GM12878 (cell line): ENCODE measurements at regions of chr2 and their contacts with region 1.

Region 1: DNA sequence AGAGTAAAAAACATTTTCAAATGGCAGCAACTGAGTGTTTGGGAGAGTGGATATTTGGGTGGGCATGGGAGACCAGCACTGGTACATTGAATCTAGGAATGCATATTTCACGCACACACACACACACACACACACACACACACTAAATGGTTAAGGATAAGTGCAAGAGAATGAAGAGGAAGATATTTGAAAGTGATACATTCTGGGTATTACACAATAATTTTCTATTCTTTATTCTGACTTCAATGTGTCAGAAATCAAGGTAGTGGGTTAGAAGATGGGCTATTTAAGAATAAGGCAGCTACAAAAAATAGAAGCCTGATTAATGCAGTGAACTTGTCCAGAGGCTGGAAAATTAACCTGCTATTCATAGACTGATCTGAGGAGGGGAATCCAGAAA is 577.0 kb downstream of the TMEM182 start:
- DNase-seq: no peak
- ATAC-seq: no peak
- H3K4me3 ChIP-seq: no peak overlapping the region
- H3K27ac ChIP-seq: no peak overlapping the region
- H3K4me1 ChIP-seq: no peaks in the 10 kb centered on the region
- H3K27me3 ChIP-seq: no peaks in the 10 kb centered on the region
- CTCF ChIP-seq: no peak
- EP300 ChIP-seq: no peak
- POLR2A ChIP-seq: no peak
- RAD21 ChIP-seq: no peak

Region 2: DNA sequence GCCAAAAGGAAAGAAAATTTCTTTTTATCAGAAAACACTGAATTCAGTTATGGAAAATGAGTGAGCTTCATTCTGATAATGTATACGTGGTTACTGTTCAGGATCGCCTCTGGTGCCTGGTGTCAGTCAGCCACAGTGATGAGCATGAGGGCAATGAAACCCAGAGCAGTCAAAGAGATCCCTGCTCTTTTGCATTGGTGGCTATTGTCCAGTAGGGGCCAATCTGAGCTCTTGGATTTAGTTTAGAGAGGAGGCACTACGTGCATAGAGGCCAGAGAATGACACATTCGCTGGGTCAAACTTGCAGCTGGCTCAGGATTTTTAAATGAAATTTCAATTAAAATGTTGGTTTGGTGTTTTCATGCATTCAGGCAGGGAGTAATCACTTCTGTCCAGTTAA is 54.1 kb before region 1 on chr2:
- CTCF ChIA-PET with region 1: no interaction called
- POLR2A ChIA-PET with region 1: no interaction called
- RAD21 ChIA-PET with region 1: no interaction called
- SMC1A ChIA-PET with region 1: no interaction called
- in situ Hi-C with region 1: no loop called
- intact Hi-C with region 1: no loop called
- DNase-seq: no peak
- ATAC-seq: no peak
- H3K4me3 ChIP-seq: no peak overlapping the region
- H3K27ac ChIP-seq: no peak overlapping the region
- H3K4me1 ChIP-seq: no peaks in the 10 kb centered on the region
- H3K27me3 ChIP-seq: no peaks in the 10 kb centered on the region
- CTCF ChIP-seq: no peak
- EP300 ChIP-seq: no peak
- POLR2A ChIP-seq: no peak
- RAD21 ChIP-seq: no peak

Region 3: GRCh38 chr2:103361712-103362111 is 22.9 kb after region 1 on chr2:
- CTCF ChIA-PET with region 1: no interaction called
- POLR2A ChIA-PET with region 1: no interaction called
- RAD21 ChIA-PET with region 1: no interaction called
- SMC1A ChIA-PET with region 1: no interaction called
- in situ Hi-C with region 1: no loop called
- intact Hi-C with region 1: loop called (anchors 2 kb)
- DNase-seq: no peak
- ATAC-seq: no peak
- H3K4me3 ChIP-seq: no peak overlapping the region
- H3K27ac ChIP-seq: no peak overlapping the region
- H3K4me1 ChIP-seq: no peaks in the 10 kb centered on the region
- H3K27me3 ChIP-seq: no peaks in the 10 kb centered on the region
- CTCF ChIP-seq: no peak
- EP300 ChIP-seq: no peak
- POLR2A ChIP-seq: no peak
- RAD21 ChIP-seq: no peak

Region 4: DNA sequence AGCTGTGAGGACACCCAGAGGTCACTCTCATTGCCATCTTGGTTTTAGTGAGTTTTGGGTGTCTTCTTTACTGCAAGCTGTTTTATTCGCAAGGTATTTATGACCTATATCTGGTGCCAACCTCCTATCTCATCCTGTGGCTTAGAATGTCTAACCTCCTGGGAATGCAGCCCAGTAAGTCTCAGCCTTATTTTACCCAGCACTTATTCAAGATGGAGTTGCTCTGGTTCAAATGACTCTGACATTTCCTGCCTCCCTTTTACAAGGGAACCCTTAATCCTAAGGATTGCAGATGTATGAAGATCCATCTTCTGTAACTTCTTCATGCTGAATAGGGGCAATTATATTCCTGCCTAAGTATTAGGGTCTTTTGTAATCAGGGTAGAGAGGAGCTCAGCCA is 131.0 kb after region 1 on chr2:
- CTCF ChIA-PET with region 1: no interaction called
- POLR2A ChIA-PET with region 1: no interaction called
- RAD21 ChIA-PET with region 1: no interaction called
- SMC1A ChIA-PET with region 1: no interaction called
- in situ Hi-C with region 1: no loop called
- intact Hi-C with region 1: no loop called
- DNase-seq: no peak
- ATAC-seq: no peak
- H3K4me3 ChIP-seq: no peak overlapping the region
- H3K27ac ChIP-seq: no peak overlapping the region
- H3K4me1 ChIP-seq: no peaks in the 10 kb centered on the region
- H3K27me3 ChIP-seq: no peaks in the 10 kb centered on the region
- CTCF ChIP-seq: no peak
- EP300 ChIP-seq: no peak
- POLR2A ChIP-seq: no peak
- RAD21 ChIP-seq: no peak